ENCODE measurements at regions of chr1 and their contacts with region 1.

Region 1: DNA sequence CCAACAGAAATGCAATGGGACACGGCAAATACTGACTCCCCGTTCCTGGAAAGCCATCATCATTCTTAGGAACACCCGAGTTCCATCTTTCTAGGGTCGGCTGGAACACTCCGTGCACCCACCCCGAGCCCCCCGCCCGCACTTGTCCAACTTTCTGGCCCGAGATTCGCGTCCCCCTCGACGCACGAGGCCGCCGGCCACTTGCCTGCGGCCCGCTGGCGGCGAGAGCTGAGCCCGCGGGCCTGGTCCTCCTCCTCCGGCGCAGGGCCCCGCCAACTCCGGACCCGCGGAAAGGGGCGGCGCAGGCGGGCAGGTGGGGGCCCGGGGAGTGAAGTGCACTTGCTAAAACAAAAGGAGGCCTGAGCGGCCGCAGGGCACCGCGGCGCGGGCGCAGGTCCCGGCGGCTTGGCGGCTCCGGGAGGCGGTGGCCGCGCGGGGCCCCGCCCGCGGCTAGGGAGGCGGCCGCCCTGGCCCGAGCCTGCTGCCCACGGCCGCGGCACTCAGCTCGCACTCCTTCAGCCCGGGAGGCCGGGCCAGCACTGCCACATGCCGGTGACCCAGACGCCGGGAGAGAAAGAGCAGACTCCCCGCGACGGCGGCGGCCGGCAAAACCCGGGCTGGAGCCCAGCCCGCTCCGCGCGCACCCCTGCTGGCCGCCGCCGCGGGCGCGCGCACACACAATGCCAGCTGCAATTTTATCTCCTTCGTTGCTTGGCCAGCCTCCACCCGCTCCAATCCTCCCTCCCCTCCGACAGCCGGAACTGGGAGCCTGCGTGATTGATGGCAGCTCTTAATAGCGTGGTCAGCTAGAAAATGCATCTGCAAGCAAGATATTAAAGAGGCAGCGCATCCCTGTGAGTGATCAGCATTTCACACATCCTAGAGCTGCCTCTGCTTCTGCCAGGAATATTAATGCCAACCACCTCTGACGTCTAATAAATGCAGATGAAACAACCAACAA is 114.3 kb downstream of the RERE start:
- DNase-seq: peak; percentile 83 to 92 (median 91)
- H3K4me3 ChIP-seq: peak overlapping the region; percentile 73
- H3K27ac ChIP-seq: peak overlapping the region; percentile 16 to 65
- H3K4me1 ChIP-seq: peaks cover 7% of the 10 kb centered on the region
- H3K27me3 ChIP-seq: no peaks in the 10 kb centered on the region
- CTCF ChIP-seq: peak in 2 of 3 donors; percentile 28 to 35
- EP300 ChIP-seq: no peak
- POLR2A ChIP-seq: peak; percentile 42

Region 2: DNA sequence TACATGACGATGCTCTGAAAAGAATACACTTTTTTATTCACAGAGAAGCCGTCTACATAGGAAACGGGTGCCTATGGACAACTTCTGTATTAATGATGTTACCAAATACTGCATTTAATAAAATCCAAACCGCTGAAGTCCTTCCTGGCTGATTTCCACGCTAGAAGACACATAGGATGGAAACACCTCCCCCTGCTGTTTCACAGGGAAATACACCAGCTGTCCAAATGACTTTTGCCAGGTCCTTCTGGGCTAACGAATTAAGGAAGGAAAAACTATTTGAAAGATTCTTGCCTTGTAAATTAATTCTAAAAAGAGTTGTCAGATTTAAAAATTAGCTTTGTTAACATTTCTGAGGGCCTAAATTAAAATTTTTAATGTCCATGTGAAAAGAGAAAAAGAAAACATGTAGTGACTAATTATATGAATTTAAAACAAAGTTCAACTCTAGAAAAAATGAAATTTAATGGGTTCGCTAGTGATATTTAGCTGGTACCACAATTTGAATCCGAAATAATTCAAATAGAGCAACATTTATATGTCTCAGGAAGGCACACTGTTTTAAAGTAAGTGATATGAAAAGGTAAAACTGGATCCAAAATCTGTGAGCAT is 31.7 kb before region 1 on chr1:
- intact Hi-C with region 1: loop called in 1 of 4 experiments (anchors 5 kb)
- DNase-seq: peak in 2 of 5 donors; percentile 21 to 60
- H3K4me3 ChIP-seq: no peak overlapping the region
- H3K27ac ChIP-seq: no peak overlapping the region
- H3K4me1 ChIP-seq: peaks cover 4% of the 10 kb centered on the region
- H3K27me3 ChIP-seq: no peaks in the 10 kb centered on the region
- CTCF ChIP-seq: peak; percentile 65 to 86 (median 85)
- EP300 ChIP-seq: no peak
- POLR2A ChIP-seq: no peak